PC-9 (cell line): ENCODE measurements at regions of chr20 and their contacts with region 1.

Region 1: DNA sequence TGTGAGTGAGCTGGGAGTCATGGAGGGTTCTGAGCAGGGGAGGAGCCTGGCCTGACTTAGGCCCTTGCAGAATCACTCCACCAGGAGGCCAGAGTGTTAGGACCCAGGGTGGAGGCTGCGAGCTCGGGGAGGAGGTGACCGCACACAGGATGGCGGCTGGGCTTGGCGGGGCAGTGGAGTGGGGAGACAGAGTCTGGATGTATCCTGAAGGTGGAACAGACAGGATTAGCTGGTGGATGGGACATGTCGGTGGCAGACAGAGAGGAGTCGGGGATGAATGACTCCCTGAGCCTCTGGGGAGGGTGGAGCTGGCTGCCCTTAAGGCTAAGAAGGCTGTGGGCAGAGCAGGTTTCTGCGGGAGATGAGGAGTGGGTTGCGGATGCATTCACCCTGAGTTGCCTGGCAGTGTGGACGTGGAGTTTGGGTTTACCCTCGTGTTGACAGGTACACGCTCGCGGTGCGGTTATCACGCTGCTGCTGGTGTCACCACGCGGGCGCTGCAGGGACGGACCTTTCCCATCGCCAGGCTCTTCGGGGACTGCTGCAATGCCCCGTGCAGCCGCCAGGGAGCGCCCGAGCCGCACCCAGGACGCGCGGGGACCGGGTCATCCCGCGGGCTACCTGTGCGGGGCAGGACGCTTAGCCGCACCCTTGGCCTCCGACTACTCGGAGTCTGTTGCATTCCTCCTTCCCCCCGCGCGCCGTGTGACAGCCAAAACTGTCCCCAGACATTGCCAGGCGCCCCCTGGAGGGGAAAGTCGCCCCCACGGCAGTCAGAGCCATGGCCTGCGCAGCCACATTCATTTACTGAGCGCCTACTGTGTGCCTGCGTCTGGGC is 43.0 kb upstream of the PTGIS start:
- DNase-seq: peak; percentile 80 to 94
- H3K4me3 ChIP-seq: no peak overlapping the region
- H3K27ac ChIP-seq: peak overlapping the region; percentile 18; the same call in 1 of the 2 replicates
- H3K4me1 ChIP-seq: peaks cover 74% of the 10 kb centered on the region
- H3K27me3 ChIP-seq: no peaks in the 10 kb centered on the region
- CTCF ChIP-seq: peak; percentile 99

Region 2: DNA sequence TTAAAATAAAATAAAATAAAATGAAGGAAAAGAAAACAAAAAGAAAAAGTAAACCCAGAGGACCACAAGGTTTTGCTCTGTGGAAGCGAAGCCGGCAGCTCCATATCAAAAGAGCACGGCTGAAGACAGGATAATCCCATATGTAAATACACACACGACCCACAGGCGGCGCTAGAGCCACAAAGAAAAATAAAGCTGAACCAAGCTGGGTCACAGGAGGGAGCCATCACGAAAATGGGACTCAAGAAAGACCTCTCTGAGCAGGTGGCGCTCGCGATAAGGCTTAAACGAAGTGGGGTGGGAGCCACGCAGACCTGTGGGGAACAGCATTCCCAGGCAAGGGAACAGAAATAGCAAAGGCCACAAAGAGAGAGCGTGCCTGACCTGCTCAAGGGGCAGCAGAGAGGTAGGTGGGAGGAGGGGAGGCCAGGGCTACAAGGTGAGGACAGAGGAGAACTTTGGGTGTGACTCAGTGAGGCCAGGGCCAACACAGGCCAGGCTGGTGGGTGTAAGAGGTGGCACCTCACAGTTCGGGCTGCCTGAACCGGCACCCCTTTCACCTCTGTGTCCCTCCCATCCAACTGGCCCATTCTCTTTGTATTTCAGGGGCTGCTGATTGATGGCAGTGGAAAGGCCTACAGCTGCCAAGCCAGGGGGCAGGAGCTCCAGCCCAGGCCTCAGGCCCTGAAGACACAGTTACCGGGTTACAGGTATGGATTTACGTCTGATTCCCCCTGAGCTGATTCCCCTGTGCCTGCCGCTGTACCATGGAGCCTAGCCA is 69.0 kb before region 1 on chr20:
- CTCF ChIA-PET with region 1: interaction called, 75 read pairs
- POLR2A ChIA-PET with region 1: no interaction called
- intact Hi-C with region 1: loop called (anchors 1 kb)
- DNase-seq: peak; percentile 74 to 81
- H3K4me3 ChIP-seq: no peak overlapping the region
- H3K27ac ChIP-seq: peak overlapping the region; percentile 41
- H3K4me1 ChIP-seq: peaks cover 23% of the 10 kb centered on the region
- H3K27me3 ChIP-seq: no peaks in the 10 kb centered on the region
- CTCF ChIP-seq: peak; percentile 100

Region 3: GRCh38 chr20:49575551-49576060 is 35.3 kb before region 1 on chr20:
- CTCF ChIA-PET with region 1: no interaction called
- POLR2A ChIA-PET with region 1: no interaction called
- intact Hi-C with region 1: no loop called
- DNase-seq: no peak
- H3K4me3 ChIP-seq: no peak overlapping the region
- H3K27ac ChIP-seq: no peak overlapping the region
- H3K4me1 ChIP-seq: peaks cover 29% of the 10 kb centered on the region
- H3K27me3 ChIP-seq: no peaks in the 10 kb centered on the region
- CTCF ChIP-seq: no peak

Region 4: DNA sequence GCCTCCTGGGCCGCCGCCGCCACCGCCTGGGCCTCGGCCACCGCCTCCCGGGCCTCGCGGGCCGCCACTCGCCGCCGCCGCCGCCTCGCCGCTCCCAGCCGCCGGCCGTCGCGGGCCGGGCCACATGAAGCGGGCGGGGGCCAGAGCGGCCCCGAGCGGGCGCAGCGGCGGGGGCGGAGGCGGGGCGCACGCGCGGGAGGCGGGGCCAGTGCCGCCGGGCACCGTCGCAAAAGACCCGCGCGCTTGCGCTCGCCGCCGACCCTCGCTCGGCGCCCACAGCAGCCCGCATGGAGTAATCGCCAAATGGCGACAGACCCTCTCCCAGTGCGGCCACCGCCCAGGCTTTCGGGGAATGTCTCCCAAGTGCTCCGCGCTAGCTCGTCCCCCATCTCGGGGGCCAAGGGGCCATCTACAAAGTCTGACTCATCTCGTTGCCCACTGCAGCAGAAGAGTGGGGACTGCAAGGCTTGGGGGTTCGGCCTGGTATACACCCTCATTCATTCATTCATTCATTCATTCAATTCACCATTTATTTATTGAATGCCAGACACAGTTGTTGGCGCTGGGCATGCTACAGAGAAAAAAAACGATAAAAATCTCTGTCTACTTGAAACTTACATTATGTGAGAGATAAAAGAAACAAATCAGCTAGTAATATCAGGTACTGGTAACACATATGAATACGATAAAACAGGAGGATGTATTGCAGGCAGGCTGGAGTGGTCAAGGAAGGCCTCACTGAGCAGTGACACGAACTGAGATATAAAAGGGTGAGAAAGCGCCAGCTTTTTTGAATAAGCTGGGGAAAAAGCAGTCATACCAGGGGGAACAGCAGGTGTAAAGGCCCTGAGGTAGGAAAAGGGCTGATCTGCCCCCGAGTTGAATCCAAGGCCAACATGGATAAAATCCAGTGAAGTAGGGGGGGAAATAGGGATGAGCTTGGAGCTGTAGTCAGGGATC is 103.1 kb after region 1 on chr20 and contains the start of gene B4GALT5:
- CTCF ChIA-PET with region 1: no interaction called
- POLR2A ChIA-PET with region 1: interaction called, 3 read pairs
- intact Hi-C with region 1: loop called (anchors 5 kb)
- DNase-seq: peak in 1 of 2 experiments; percentile 80
- H3K4me3 ChIP-seq: peak within 1 kb of the TSS; percentile 86
- H3K27ac ChIP-seq: peak within 1 kb of the TSS; percentile 84
- H3K4me1 ChIP-seq: peaks cover 62% of the 10 kb centered on the region
- H3K27me3 ChIP-seq: no peaks in the 10 kb centered on the region
- CTCF ChIP-seq: no peak
- total RNA-seq, gene B4GALT5: 61.7 and 63.1 TPM in 2 replicates

Region 5: GRCh38 chr20:49812463-49813304 is 201.8 kb after region 1 on chr20 and contains the start of gene SLC9A8:
- CTCF ChIA-PET with region 1: interaction called, 3 read pairs
- POLR2A ChIA-PET with region 1: interaction called, 4 read pairs
- intact Hi-C with region 1: loop called (anchors 1 kb)
- DNase-seq: peak; percentile 94 to 97
- H3K4me3 ChIP-seq: peak within 1 kb of the TSS; percentile 87
- H3K27ac ChIP-seq: peak within 1 kb of the TSS; percentile 98
- H3K4me1 ChIP-seq: peaks cover 70% of the 10 kb centered on the region
- H3K27me3 ChIP-seq: no peaks in the 10 kb centered on the region
- CTCF ChIP-seq: no peak
- total RNA-seq, gene SLC9A8: 12.7 and 21.4 TPM in 2 replicates

Region 6: GRCh38 chr20:49928401-49929141 is 317.7 kb after region 1 on chr20:
- CTCF ChIA-PET with region 1: no interaction called
- POLR2A ChIA-PET with region 1: no interaction called
- intact Hi-C with region 1: loop called (anchors 1 kb)
- DNase-seq: peak; percentile 86 to 89
- H3K4me3 ChIP-seq: no peak overlapping the region
- H3K27ac ChIP-seq: peak overlapping the region; percentile 53
- H3K4me1 ChIP-seq: peaks cover 13% of the 10 kb centered on the region; the same call in 1 of the 2 replicates
- H3K27me3 ChIP-seq: no peaks in the 10 kb centered on the region
- CTCF ChIP-seq: peak; percentile 98

Region 7: DNA sequence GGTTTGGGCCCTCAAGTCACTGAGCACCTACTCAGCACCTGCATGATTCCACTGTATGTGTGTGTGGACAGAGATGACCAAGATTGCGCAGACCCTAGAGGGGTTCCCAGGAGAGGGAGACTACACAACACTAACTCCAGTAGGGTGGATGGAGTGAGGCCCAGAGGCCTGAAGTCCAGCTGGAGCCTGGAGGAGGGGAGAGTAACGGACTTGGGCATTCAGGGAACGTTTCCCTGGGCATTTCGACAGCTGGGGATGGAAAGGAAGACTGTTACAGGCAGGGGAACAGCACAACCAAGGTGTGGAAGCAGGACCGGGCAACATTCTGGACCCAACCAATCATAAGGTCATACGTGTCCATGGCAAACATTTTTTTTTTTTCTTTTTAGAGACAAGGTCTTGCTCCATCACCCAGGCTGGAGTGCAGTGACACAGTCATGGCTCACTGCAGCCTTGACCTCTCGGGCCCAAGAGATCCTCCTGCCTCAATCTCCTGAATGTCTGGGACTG is 568.6 kb after region 1 on chr20:
- CTCF ChIA-PET with region 1: no interaction called
- POLR2A ChIA-PET with region 1: no interaction called
- intact Hi-C with region 1: loop called (anchors 5 kb)
- DNase-seq: no peak
- H3K4me3 ChIP-seq: no peak overlapping the region
- H3K27ac ChIP-seq: no peak overlapping the region
- H3K4me1 ChIP-seq: no peaks in the 10 kb centered on the region
- H3K27me3 ChIP-seq: no peaks in the 10 kb centered on the region
- CTCF ChIP-seq: peak; percentile 42